Activated B cell treated with CpG ODN at 0.5 μM for 24 hours (primary cell): ENCODE measurements at regions of chr1 and their contacts with region 1.

Region 1: GRCh38 chr1:168509875-168510791 is 33.7 kb downstream of the XCL2 start:
- DNase-seq: no peak
- ATAC-seq: no peak
- H3K4me3 Mint-ChIP-seq: no peak overlapping the region
- H3K27ac Mint-ChIP-seq: no peak overlapping the region
- H3K4me1 Mint-ChIP-seq: no peaks in the 10 kb centered on the region
- H3K27me3 Mint-ChIP-seq: peaks cover 2% of the 10 kb centered on the region
- CTCF ChIP-seq: no peak

Region 2: DNA sequence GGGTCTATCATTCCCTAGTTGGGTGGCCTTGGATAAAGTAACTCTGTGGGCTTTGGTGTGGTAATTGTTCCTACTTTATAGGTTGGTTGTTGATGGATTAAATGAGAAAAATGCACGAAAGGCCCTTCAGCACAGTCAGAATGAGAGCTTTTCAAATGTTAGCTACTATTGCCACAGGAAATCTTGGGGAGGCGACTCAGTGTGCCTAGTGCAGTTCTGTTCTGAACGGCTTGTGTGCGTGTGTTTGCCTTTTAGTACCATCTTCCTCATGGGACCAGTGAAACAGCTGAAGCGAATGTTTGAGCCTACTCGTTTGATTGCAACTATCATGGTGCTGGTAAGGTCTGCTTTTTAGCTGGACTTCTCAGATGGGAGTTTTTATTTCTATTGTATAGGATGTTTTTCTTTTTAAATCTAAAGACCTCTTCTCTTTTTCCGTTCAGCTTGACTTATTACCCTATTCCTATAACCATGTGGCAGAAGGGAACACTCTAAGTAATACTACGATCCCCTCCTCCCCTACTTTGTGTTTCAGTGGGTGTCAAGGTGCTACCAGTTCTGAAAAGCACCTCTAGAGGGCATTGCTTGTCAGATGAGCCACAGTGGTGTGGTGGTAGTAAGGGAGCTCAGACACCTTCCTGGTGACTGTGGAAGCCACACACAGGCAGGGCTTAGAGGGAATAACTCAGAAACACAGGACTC is 275.1 kb before region 1 on chr1:
- CTCF ChIA-PET with region 1: no interaction called
- POLR2A ChIA-PET with region 1: no interaction called
- intact Hi-C with region 1: no loop called
- DNase-seq: no peak
- ATAC-seq: peak; percentile 92
- H3K4me3 Mint-ChIP-seq: no peak overlapping the region
- H3K27ac Mint-ChIP-seq: no peak overlapping the region
- H3K4me1 Mint-ChIP-seq: peaks cover 38% of the 10 kb centered on the region
- H3K27me3 Mint-ChIP-seq: no peaks in the 10 kb centered on the region
- CTCF ChIP-seq: no peak

Region 3: GRCh38 chr1:168535536-168535935 is 25.4 kb after region 1 on chr1:
- CTCF ChIA-PET with region 1: no interaction called
- POLR2A ChIA-PET with region 1: no interaction called
- intact Hi-C with region 1: loop called (anchors 1 kb)
- DNase-seq: no peak
- ATAC-seq: no peak
- H3K4me3 Mint-ChIP-seq: no peak overlapping the region
- H3K27ac Mint-ChIP-seq: no peak overlapping the region
- H3K4me1 Mint-ChIP-seq: peaks cover 12% of the 10 kb centered on the region
- H3K27me3 Mint-ChIP-seq: no peaks in the 10 kb centered on the region
- CTCF ChIP-seq: no peak